Heart right ventricle (tissue), 16 donors: ENCODE measurements at regions of chr7 and their contacts with region 1.

Region 1: GRCh38 chr7:75795831-75796285 is 17.7 kb downstream of the CCL24 start:
- DNase-seq: peak; percentile 42 to 53
- ATAC-seq: peak in 7 of 8 donors; percentile 47 to 81 (median 63)
- H3K4me3 ChIP-seq: no peak overlapping the region
- H3K27ac ChIP-seq: peak overlapping the region in 6 of 10 donors; percentile 4 to 65 (median 40)
- H3K4me1 ChIP-seq: peaks cover 3 to 37% (median 9%) of the 10 kb centered on the region in 9 donors
- H3K27me3 ChIP-seq: no peaks in the 10 kb centered on the region
- CTCF ChIP-seq: no peak

Region 2: DNA sequence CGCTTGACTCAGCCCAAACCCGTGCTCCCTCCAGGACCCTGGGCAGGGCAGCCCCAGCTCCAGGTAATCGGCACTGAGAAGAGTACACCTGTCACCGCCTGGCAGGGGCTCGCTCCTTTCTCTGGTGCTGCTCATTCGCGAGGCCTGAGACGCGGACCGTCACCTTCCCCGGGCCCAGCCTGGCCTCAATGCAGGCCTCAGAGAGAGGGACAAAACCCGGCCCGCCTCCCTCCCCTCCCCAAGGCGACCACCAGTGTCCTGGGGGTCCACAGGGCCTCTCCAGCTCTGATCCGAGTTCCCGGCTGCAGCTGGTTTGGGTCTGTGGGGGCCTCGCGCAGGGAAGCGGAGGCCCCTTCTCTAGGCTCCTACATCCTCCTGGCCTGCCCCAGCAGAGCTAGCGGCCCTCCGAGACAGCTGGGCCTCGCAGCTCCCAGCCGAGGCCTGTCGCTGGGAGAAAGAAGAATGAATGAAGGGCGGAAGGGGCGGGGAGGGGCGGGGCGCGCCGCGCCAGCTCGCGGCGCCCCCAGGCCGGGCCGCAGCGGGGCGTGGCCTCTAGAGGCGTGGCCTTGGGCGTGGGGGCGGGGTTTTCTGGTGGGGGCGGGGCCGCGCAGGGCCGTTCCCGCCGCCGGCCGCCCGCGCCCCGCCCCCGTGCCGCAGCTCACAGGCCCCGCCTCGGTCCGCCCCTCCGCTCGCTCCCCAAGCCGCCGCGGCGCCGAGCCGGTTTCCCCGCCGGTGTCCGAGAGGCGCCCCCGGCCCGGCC is 1712.6 kb before region 1 on chr7 and contains the start of gene LIMK1:
- intact Hi-C with region 1: no loop called
- DNase-seq: peak; percentile 74 to 87
- ATAC-seq: peak; percentile 84 to 97 (median 92)
- H3K4me3 ChIP-seq: peak within 1 kb of the TSS; percentile 50 to 95 (median 76)
- H3K27ac ChIP-seq: peak within 1 kb of the TSS in 7 of 10 donors; percentile 23 to 85 (median 56)
- H3K4me1 ChIP-seq: peaks cover 6 to 23% (median 20%) of the 10 kb centered on the region in 9 donors
- H3K27me3 ChIP-seq: no peaks in the 10 kb centered on the region
- CTCF ChIP-seq: no peak
- total RNA-seq, gene LIMK1: 6.1 to 17.3 (median 9.9) TPM

Region 3: GRCh38 chr7:75854233-75854632 is 58.4 kb after region 1 on chr7:
- intact Hi-C with region 1: loop called in 1 of 10 experiments (anchors 10 kb)
- DNase-seq: no peak
- ATAC-seq: no peak
- H3K4me3 ChIP-seq: no peak overlapping the region
- H3K27ac ChIP-seq: peak overlapping the region in 1 of 10 donors; percentile 36
- H3K4me1 ChIP-seq: peaks cover 0 to 24% (median 0%) of the 10 kb centered on the region in 9 donors
- H3K27me3 ChIP-seq: no peaks in the 10 kb centered on the region
- CTCF ChIP-seq: no peak

Region 4: DNA sequence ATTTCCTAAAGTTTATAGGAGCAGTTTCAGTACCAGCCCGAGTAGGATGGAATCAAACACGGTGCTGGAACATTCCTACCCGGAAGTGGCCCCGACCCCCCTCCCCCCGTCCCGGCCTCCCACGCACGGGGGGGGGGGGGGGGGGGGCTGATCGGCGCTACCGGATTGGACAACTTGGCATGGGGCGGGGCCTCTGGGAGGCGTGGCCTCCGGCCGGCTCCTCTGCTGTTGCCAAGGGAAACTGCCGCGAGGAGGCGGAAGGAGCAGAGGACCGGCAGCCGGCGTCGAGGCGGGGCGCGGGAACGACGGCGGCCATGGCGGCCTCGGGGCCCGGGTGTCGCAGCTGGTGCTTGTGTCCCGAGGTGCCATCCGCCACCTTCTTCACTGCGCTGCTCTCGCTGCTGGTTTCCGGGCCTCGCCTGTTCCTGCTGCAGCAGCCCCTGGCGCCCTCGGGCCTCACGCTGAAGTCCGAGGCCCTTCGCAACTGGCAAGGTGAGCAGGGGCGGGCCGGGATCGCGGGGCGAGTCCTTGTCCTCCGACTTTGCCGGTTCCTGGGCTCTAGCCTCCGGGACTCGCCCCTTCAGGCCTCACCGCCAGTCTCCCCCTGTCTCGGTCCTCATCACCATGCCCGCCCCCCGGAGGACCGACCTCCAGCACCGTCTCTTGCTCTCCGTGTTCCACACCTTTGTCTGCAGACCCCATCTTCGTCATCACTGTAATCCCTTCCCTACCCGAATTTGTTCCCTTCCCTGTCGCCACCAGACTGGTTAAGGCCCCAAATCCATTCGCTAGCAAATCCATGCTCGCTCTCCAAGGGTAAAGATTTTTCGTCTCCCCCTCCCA is 83.1 kb after region 1 on chr7 and contains the start of gene RHBDD2:
- intact Hi-C with region 1: no loop called
- DNase-seq: peak; percentile 96 to 97
- ATAC-seq: peak; percentile 98 to 99 (median 99)
- H3K4me3 ChIP-seq: peak within 1 kb of the TSS; percentile 61 to 97 (median 78)
- H3K27ac ChIP-seq: peak within 1 kb of the TSS; percentile 47 to 91 (median 84)
- H3K4me1 ChIP-seq: peaks cover 5 to 52% (median 19%) of the 10 kb centered on the region in 9 donors
- H3K27me3 ChIP-seq: no peaks in the 10 kb centered on the region
- CTCF ChIP-seq: peak in 5 of 9 donors; percentile 26 to 53 (median 33)
- total RNA-seq, gene RHBDD2: 20.8 to 39.7 (median 27.4) TPM

Region 5: DNA sequence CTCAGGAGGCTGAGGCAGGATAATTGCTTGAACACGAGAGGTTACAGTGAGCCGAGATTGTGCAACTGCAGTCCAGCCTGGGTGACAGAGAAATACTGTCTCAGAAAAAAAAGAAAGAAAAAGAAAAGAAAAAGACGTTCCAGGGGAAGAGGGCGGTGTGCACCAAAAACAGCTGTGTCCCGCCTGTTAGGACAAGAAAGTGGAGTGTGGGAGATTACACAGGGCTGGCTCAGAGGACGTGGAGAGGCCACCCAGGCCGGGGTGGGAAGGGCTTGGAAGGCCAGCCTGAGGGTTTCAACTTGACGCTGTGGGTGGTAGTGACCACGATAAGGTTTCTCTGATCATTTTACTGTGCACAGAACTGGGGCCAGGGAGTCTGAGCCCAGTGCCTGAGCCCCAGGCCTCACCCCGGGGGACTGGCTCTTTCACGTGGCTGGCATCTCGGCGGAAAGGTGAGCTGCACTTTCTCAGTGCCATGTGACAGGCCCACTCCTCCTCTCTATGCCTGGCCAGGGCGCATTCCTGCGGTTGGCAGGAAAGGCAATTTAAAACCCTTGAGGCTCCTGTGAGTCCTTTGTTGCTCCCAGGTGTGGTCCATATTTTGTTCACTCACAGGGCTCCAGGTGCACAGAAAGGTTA is 96.9 kb after region 1 on chr7:
- intact Hi-C with region 1: no loop called
- DNase-seq: peak; percentile 41 to 50
- ATAC-seq: peak; percentile 43 to 86 (median 77)
- H3K4me3 ChIP-seq: no peak overlapping the region
- H3K27ac ChIP-seq: peak overlapping the region in 4 of 10 donors; percentile 28 to 48 (median 36)
- H3K4me1 ChIP-seq: peaks cover 0 to 10% (median 0%) of the 10 kb centered on the region in 9 donors
- H3K27me3 ChIP-seq: no peaks in the 10 kb centered on the region
- CTCF ChIP-seq: peak in 1 of 9 donors; percentile 7

Region 6: DNA sequence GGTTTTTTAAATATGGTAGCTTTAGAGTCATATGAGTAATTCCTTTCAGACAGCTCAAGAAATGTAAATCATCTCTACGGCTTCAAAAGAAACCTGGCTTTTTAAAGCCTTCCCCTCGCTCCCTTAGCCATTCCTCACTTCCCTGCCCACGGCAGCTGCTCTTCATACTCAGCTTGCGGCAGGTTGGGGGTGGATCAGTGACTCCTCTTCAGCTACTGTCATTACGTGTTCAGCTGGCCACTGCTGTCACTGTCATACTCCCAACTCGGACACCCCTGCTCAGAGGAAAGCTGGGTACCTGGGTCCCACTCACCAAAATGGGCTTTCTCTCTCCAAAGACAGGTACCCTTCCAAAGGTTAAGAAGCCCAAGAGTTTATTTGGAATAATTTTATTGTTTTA is 556.3 kb after region 1 on chr7:
- intact Hi-C with region 1: no loop called
- DNase-seq: no peak
- ATAC-seq: no peak
- H3K4me3 ChIP-seq: no peak overlapping the region
- H3K27ac ChIP-seq: peak overlapping the region in 3 of 10 donors; percentile 23 to 97 (median 55)
- H3K4me1 ChIP-seq: peaks cover 21 to 95% (median 89%) of the 10 kb centered on the region in 9 donors
- H3K27me3 ChIP-seq: no peaks in the 10 kb centered on the region
- CTCF ChIP-seq: no peak